Activated CD4-positive, alpha-beta memory T cell treated with anti-CD3 and anti-CD28 coated beads, Interleukin-2, amount 10 ng/mL, durations not matched to agents 7 days and 5 days (primary cell): ENCODE measurements at regions of chr1 and their contacts with region 1.

Region 1: GRCh38 chr1:37602750-37603694 is 7.3 kb upstream of the GNL2 start:
- DNase-seq: peak; percentile 34
- H3K4me3 Mint-ChIP-seq: no peak overlapping the region
- H3K27ac Mint-ChIP-seq: no peak overlapping the region
- H3K4me1 Mint-ChIP-seq: no peaks in the 10 kb centered on the region
- H3K27me3 Mint-ChIP-seq: peaks cover 12% of the 10 kb centered on the region

Region 2: DNA sequence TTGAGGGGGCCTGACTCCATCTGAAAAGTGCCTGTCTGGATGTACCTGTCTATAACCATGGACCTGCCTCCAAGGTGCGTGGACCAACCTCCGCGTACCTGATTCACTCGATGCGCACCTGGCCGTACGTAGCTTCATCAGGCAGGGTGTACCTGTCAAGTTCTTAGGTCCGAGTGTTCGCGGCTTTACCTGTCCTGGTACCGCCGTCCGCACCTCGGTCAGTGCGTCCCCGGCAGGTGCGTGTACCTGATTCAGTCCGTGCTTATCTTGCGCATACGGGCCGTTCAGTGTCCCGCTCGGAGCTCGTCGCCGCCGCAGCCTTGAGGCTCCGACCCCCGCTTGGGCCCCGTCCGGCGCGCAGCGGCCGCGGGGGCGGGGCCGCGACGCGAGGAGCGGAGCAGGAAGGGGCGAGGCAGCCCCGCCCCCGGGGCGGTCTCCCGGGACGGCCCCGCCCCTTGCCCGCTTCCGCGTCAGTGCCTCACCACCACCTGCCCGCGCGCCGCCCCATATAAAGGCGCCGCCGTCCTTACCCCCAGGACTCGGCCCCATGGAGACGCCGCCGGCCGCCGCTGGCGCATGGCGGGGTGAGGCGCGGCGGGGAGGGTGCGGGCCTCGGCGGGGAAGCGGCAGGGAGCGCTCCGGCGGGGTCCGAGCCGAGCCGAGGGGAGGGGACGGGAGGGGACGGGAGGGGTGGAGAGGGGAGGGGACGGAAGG is 128.8 kb before region 1 on chr1 and contains the start of gene ZC3H12A:
- CTCF ChIA-PET with region 1: no interaction called
- POLR2A ChIA-PET with region 1: no interaction called
- DNase-seq: peak; percentile 93
- H3K4me3 Mint-ChIP-seq: peak within 1 kb of the TSS; percentile 98
- H3K27ac Mint-ChIP-seq: peak within 1 kb of the TSS; percentile 99
- H3K4me1 Mint-ChIP-seq: peaks cover 53% of the 10 kb centered on the region
- H3K27me3 Mint-ChIP-seq: no peaks in the 10 kb centered on the region
- total RNA-seq, gene ZC3H12A: 29.9 to 31.1 TPM

Region 3: GRCh38 chr1:37673920-37674319 is 70.9 kb after region 1 on chr1:
- CTCF ChIA-PET with region 1: interaction called, 11 read pairs
- POLR2A ChIA-PET with region 1: no interaction called
- DNase-seq: peak; percentile 84
- H3K4me3 Mint-ChIP-seq: no peak overlapping the region
- H3K27ac Mint-ChIP-seq: no peak overlapping the region
- H3K4me1 Mint-ChIP-seq: peaks cover 21% of the 10 kb centered on the region
- H3K27me3 Mint-ChIP-seq: peaks cover 30% of the 10 kb centered on the region

Region 4: GRCh38 chr1:37682334-37682987 is 79.4 kb after region 1 on chr1:
- CTCF ChIA-PET with region 1: interaction called, 88 read pairs
- POLR2A ChIA-PET with region 1: no interaction called
- DNase-seq: peak; percentile 78
- H3K4me3 Mint-ChIP-seq: no peak overlapping the region
- H3K27ac Mint-ChIP-seq: no peak overlapping the region
- H3K4me1 Mint-ChIP-seq: peaks cover 6% of the 10 kb centered on the region
- H3K27me3 Mint-ChIP-seq: no peaks in the 10 kb centered on the region